ENCODE measurements at regions of chr1 and their contacts with region 1.

Region 1: DNA sequence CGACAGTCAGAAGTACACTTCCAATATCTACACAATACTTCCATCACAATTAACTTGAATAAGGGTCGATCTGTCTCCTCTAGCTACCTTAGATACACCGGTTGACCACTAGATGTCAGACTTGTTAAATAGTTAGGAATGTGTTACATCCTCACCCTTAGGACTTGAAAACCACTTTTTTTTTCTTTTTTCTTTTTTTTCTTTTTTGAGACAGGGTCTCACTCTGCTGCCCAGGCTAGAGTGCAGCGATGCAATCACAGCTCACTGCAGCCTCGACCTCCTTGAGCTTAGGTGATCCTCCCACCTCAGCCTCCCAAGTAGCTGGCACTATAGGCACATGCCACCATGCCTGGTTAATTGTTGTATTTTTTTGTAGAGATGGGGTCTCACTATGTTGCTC is 120.4 kb upstream of the GREM2 start:
- DNase-seq: peak; percentile 70
- H3K4me3 ChIP-seq: no peak overlapping the region
- H3K27ac ChIP-seq: no peak overlapping the region
- H3K4me1 ChIP-seq: no peaks in the 10 kb centered on the region
- H3K27me3 ChIP-seq: no peaks in the 10 kb centered on the region
- CTCF ChIP-seq: peak; percentile 55
- POLR2A ChIP-seq: no peak

Region 2: DNA sequence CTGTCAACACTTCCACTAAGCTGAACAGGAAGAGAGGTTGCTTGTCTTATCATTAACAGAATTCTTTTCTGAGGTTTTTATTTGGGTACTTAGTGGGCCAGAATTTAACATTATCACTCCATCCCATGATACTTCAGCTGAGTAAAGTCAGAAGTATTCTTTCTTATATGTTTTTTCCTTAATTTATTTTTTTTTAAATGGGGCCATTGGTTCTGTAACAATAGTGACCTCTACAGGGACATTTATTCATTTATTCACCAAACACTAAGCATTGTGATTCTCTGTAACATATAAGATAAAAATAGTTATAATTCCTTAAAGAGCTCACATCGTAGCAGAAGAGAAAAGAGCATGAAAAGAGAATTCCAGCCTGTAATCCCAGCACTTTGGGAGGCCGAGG is 130.2 kb before region 1 on chr1:
- CTCF ChIA-PET with region 1: no interaction called
- POLR2A ChIA-PET with region 1: no interaction called
- dilution Hi-C with region 1: no loop called
- intact Hi-C with region 1: no loop called
- DNase-seq: no peak
- H3K4me3 ChIP-seq: no peak overlapping the region
- H3K27ac ChIP-seq: no peak overlapping the region
- H3K4me1 ChIP-seq: no peaks in the 10 kb centered on the region
- H3K27me3 ChIP-seq: no peaks in the 10 kb centered on the region
- CTCF ChIP-seq: no peak
- POLR2A ChIP-seq: no peak

Region 3: GRCh38 chr1:240765732-240766363 is 33.5 kb after region 1 on chr1:
- CTCF ChIA-PET with region 1: interaction called, 4 read pairs
- POLR2A ChIA-PET with region 1: no interaction called
- dilution Hi-C with region 1: no loop called
- intact Hi-C with region 1: loop called (anchors 1 kb)
- DNase-seq: peak; percentile 75
- H3K4me3 ChIP-seq: no peak overlapping the region
- H3K27ac ChIP-seq: peak overlapping the region; percentile 89
- H3K4me1 ChIP-seq: peaks cover 20% of the 10 kb centered on the region
- H3K27me3 ChIP-seq: no peaks in the 10 kb centered on the region
- CTCF ChIP-seq: no peak
- POLR2A ChIP-seq: no peak

Region 4: DNA sequence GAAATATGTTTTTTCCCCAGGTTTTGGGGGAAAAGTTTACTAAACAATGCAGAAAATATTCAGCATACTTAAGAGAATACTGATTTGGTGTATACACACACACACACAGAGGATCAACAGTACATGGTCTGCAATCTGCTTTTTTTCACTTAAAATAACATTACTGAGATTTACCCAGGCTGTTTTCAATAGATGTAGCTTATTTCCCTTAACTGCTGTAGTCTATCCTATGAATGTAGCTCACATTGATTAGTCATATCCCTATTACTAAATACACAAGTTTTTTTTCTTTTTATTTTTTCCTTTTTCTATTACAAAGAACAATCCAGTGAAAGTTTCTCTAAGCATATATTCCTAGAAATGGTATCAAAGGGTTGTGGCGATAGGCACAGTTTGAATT is 146.2 kb after region 1 on chr1:
- CTCF ChIA-PET with region 1: interaction called, 49 read pairs
- POLR2A ChIA-PET with region 1: no interaction called
- dilution Hi-C with region 1: no loop called
- intact Hi-C with region 1: no loop called
- DNase-seq: peak; percentile 81
- H3K4me3 ChIP-seq: no peak overlapping the region
- H3K27ac ChIP-seq: no peak overlapping the region
- H3K4me1 ChIP-seq: peaks cover 13% of the 10 kb centered on the region
- H3K27me3 ChIP-seq: no peaks in the 10 kb centered on the region
- CTCF ChIP-seq: no peak
- POLR2A ChIP-seq: no peak

Region 5: DNA sequence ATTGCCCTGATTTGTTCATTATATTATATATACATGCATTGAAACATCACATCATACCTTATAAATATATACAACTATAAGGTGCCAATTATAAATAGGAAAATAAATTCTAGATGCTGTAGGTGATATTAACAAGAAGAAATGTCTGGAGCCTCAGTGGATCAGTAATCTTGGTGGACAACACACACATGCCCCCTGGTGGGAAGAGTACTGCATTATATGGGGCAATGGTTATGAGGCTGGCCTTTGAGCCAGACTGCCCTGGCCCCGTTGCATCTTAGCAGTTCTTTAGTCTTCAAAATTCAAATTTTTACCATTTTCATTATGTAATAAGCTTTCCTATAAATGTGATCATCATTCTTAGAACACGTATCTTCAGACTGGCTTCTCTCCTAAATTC is 214.5 kb after region 1 on chr1:
- CTCF ChIA-PET with region 1: interaction called, 65 read pairs
- POLR2A ChIA-PET with region 1: no interaction called
- dilution Hi-C with region 1: no loop called
- intact Hi-C with region 1: loop called (anchors 1 kb)
- DNase-seq: peak; percentile 52
- H3K4me3 ChIP-seq: no peak overlapping the region
- H3K27ac ChIP-seq: no peak overlapping the region
- H3K4me1 ChIP-seq: peaks cover 11% of the 10 kb centered on the region
- H3K27me3 ChIP-seq: no peaks in the 10 kb centered on the region
- CTCF ChIP-seq: peak; percentile 52 to 54
- POLR2A ChIP-seq: no peak

Region 6: GRCh38 chr1:241408170-241408569 is 675.8 kb after region 1 on chr1:
- CTCF ChIA-PET with region 1: interaction called, 14 read pairs
- POLR2A ChIA-PET with region 1: no interaction called
- dilution Hi-C with region 1: no loop called
- intact Hi-C with region 1: loop called (anchors 5 kb)
- DNase-seq: peak; percentile 38
- H3K4me3 ChIP-seq: no peak overlapping the region
- H3K27ac ChIP-seq: no peak overlapping the region
- H3K4me1 ChIP-seq: no peaks in the 10 kb centered on the region
- H3K27me3 ChIP-seq: no peaks in the 10 kb centered on the region
- CTCF ChIP-seq: peak in 1 of 2 donors; percentile 5
- POLR2A ChIP-seq: no peak

Region 7: DNA sequence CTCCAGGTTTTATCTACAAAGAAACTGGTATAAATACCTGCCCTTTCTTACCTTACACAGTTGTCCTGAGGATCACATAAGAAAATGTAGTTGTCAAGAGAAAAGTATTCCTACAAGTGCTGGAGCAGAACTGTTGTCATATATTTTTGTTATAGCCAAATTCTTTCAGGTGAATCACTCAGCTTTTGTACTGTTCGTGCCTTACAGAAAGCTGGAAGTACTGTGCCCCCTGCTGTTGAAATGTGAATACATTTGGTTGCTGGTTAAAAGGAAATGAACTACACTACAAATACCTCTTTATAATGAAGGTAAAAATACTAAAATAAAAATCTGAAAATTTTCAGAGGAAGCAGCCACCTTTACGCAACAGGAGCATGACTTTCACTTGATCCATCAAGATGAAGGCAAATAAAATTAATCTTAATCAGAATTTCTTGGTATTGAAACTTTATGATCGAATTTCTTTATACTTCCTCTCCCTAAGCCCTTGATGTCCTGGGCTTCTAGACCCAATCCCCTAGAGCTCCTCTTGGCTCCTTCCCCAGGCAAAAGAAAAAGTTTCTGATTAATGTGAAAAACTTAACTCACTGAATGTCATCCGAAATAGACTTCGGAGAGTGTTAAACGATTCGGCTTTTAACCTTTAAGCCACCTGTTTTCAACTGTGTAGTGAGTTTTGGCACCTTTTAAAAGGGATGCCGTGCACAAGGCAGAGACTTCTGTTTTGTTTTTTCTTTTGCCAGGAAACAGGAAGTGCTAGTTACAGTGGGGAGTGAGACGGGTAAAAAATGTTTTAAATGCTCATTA is 895.3 kb after region 1 on chr1:
- CTCF ChIA-PET with region 1: interaction called, 7 read pairs
- POLR2A ChIA-PET with region 1: no interaction called
- dilution Hi-C with region 1: no loop called
- intact Hi-C with region 1: loop called (anchors 1 kb)
- DNase-seq: peak; percentile 72
- H3K4me3 ChIP-seq: no peak overlapping the region
- H3K27ac ChIP-seq: no peak overlapping the region
- H3K4me1 ChIP-seq: no peaks in the 10 kb centered on the region
- H3K27me3 ChIP-seq: no peaks in the 10 kb centered on the region
- CTCF ChIP-seq: peak; percentile 39 to 51
- POLR2A ChIP-seq: no peak